PC-3 (cell line): ENCODE measurements at regions of chr1 and their contacts with region 1.

Region 1: GRCh38 chr1:151839457-151840405 is at the start of gene C2CD4D:
- DNase-seq: peak; percentile 91
- ATAC-seq: peak; percentile 81
- H3K4me3 ChIP-seq: peak within 1 kb of the TSS; percentile 73
- H3K27ac ChIP-seq: peak within 1 kb of the TSS; percentile 97
- H3K4me1 ChIP-seq: peaks cover 51% of the 10 kb centered on the region
- H3K27me3 ChIP-seq: no peaks in the 10 kb centered on the region
- CTCF ChIP-seq: no peak
- total RNA-seq, gene C2CD4D: 0.58 and 2.8 TPM in 2 replicates

Region 2: GRCh38 chr1:150961799-150962198 is 877.9 kb before region 1 on chr1:
- CTCF ChIA-PET with region 1: no interaction called
- POLR2A ChIA-PET with region 1: no interaction called
- intact Hi-C with region 1: no loop called
- DNase-seq: no peak
- ATAC-seq: no peak
- H3K4me3 ChIP-seq: no peak overlapping the region
- H3K27ac ChIP-seq: no peak overlapping the region
- H3K4me1 ChIP-seq: no peaks in the 10 kb centered on the region
- H3K27me3 ChIP-seq: no peaks in the 10 kb centered on the region
- CTCF ChIP-seq: no peak

Region 3: DNA sequence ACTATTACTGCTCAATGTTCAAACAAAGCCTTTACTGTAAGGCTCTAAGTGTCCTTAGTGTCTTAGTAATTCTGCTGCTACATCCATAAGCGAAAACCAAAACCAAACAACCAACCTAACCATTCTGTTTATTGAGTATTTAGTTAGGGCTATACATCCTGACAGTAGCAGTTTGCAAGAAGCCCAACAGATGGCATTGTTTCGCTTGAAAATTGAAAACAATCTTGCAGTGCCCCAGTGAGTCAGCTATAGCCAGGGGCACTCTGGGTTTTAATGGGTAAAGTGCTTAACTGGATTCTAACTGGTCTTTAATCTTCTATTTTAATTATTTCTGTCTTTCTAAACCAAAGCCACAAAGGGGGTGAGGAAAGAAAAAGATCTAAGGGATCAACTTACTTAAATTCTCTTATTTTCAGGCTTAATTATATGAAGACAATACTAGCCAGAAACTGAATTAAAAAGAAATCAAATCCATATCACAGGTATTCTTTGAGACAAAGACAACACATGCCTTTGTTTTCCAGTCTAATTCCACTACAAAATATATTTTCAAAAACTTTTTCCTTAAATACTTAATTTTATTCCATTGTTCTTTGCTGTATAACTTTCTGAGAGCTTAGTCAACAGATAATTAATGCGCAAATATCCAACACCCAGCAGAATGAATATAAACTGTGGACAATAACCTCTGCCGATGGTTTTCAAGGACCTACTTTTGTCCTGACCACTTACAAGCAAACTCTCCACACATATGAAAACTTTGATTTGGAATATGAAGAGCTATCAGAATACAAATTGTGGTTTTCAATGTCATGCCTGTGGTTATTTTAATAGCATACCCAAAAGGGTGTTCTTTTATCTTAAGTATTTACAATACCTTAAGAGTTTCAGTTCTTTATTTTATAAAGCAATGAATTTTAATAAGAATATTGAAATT is 395.6 kb before region 1 on chr1:
- CTCF ChIA-PET with region 1: no interaction called
- POLR2A ChIA-PET with region 1: no interaction called
- intact Hi-C with region 1: loop called (anchors 1 kb)
- DNase-seq: peak; percentile 98
- ATAC-seq: peak; percentile 94
- H3K4me3 ChIP-seq: no peak overlapping the region
- H3K27ac ChIP-seq: no peak overlapping the region
- H3K4me1 ChIP-seq: peaks cover 11% of the 10 kb centered on the region
- H3K27me3 ChIP-seq: no peaks in the 10 kb centered on the region
- CTCF ChIP-seq: peak; percentile 95

Region 4: DNA sequence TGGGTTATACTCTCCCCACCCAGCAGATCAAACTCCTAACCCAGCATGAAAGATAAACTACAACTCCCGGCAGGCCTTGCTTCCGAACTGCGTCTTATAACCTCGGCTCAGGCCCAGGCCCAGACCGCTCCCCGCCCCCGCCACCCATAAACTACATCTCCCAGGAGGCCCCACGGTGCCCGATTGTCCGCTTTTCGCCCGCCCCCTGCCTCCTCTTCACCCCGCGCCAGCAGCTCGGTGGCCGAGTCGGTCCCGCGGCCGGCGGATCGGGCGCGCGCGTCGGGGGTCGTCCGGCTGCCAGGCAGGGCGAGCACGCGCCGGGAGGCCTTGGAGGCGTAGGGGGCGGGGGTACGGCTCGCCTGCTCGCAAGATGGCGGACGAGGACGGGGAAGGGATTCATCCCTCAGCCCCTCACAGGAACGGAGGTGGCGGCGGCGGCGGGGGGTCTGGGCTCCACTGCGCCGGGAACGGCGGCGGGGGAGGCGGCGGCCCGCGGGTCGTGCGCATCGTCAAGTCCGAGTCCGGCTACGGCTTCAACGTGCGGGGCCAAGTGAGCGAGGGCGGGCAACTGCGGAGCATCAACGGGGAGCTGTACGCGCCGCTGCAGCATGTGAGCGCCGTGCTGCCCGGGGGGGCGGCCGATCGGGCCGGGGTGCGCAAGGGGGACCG is 227.8 kb before region 1 on chr1 and contains the start of gene SNX27:
- CTCF ChIA-PET with region 1: no interaction called
- POLR2A ChIA-PET with region 1: no interaction called
- intact Hi-C with region 1: loop called (anchors 10 kb)
- DNase-seq: peak; percentile 93
- ATAC-seq: peak; percentile 82
- H3K4me3 ChIP-seq: peak within 1 kb of the TSS; percentile 87
- H3K27ac ChIP-seq: peak within 1 kb of the TSS; percentile 25; the same call in 1 of the 2 replicates
- H3K4me1 ChIP-seq: peaks cover 55% of the 10 kb centered on the region
- H3K27me3 ChIP-seq: no peaks in the 10 kb centered on the region
- CTCF ChIP-seq: no peak
- total RNA-seq, gene SNX27: 25.1 and 34.8 TPM in 2 replicates

Region 5: DNA sequence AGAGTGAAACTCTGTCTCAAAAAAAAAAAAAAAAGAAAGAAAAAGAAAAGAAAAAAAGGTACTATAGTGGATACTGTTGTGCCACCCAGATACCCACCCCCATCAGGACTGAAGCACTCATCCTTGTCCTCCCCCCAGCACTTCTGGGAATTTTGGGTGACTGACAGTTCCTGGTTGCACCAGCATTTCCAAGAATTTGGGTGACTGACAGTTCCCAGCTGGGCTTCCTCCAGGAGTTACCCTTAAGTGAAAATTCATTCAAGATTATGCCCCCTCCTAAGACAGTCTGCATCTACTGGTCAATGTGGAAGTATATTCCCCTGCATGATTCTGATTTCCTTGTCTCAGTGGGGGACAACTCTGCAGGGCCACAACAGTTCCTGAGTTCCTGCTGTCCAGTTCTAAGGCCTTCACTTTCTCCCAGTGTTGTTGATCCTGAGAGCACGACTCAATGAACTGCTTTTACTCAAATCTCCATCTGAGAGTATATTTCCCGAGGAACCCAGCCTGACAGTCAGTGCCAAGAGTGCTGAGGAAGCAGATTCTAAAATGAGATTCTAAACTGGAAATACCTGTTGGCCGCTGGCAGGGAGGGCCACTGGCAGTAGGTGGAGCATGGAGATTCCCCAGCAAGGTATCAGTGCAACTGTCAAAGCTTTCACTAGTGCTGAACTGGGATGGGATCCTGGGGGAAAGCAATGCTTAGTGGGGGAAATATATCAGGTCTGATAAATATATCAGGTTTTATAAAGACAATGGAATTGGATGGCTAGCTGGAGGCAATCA is 99.9 kb before region 1 on chr1:
- CTCF ChIA-PET with region 1: no interaction called
- POLR2A ChIA-PET with region 1: no interaction called
- intact Hi-C with region 1: loop called (anchors 1 kb)
- DNase-seq: peak; percentile 91
- ATAC-seq: peak; percentile 59
- H3K4me3 ChIP-seq: peak overlapping the region; percentile 40; the same call in 1 of the 2 replicates
- H3K27ac ChIP-seq: no peak overlapping the region
- H3K4me1 ChIP-seq: peaks cover 9% of the 10 kb centered on the region
- H3K27me3 ChIP-seq: no peaks in the 10 kb centered on the region
- CTCF ChIP-seq: peak; percentile 43

Region 6: DNA sequence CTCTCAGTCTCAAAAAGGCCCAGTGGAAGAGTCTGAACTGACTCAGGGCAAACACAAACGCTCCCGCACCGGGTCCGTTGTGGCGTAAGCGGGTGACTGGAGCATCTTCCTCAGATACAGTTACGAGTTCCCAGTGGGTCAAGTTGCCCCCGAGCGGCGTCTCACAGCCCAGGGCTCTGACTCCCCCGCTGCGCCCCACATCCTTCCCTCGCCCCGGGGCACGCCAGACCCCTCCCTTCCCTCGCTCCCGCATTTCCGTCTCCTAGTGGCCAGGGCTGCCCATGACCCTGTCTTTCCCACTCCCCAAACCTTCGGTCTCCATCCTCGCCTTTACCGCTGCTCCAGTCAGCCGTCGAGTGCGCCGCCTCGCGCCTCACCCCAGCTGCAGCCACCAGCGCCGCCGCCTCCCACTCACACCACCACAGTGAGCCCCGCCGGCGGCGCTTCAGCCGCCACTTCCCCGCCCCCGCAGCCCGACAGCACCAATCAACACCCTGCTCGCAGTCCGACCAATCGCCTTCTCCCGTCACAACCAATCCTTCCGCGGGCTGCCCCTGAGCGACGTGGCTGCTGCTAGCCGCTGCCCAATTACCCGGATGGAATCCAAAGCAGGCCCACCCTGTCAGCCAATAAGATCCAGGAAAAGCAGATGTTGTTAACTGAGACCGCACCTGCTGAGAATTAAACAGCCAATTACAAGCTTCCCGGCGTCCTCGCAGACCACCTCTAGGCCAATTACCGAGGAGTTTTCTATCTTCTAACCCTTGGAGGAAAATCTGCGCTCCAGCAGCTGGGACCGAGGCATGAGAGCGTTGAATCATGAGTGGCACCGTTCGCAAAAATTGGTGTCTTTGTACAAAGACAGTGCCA is 49.4 kb before region 1 on chr1 and contains the start of gene TDRKH:
- CTCF ChIA-PET with region 1: no interaction called
- POLR2A ChIA-PET with region 1: no interaction called
- intact Hi-C with region 1: loop called (anchors 2 kb)
- DNase-seq: peak; percentile 99
- ATAC-seq: peak; percentile 96
- H3K4me3 ChIP-seq: peak within 1 kb of the TSS; percentile 83
- H3K27ac ChIP-seq: no peak within 1 kb of the TSS
- H3K4me1 ChIP-seq: peaks cover 12% of the 10 kb centered on the region
- H3K27me3 ChIP-seq: no peaks in the 10 kb centered on the region
- CTCF ChIP-seq: peak; percentile 45
- total RNA-seq, gene TDRKH: 15.2 and 15.6 TPM in 2 replicates